ENCODE measurements at regions of chr7 and their contacts with region 1.

Region 1: DNA sequence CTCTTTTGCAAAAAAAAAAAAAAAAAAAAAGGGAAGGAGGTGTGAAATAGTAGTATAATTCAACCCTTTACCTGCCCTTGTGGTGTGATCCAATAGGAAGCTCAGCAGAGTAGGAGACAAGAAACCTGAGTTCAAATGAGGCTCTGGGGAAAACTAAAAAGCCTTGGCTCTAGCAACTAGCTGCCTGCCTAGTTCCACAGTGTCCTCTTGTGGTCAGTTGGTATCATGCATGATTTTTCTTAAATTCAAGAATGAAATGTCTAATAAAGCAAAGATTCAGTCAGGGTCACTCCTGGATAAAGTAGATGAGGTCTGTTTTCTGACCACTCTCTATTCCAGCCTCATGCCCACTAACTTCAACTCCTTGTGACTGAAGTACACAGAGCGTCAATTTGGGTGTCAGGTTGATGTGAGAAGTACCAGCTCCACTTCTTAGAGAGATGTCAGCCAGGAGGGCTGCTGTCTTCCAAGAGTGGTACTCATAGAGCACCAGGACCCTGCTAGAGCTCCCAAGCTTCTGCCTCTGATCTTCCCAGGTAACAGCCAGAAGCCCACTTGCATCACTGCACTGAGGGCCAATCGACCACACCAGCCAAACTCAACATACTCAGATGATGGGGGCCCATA is 10.5 kb downstream of the LSM5 start:
- DNase-seq: peak; percentile 48
- ATAC-seq: peak; percentile 42
- H3K4me3 Mint-ChIP-seq: no peak overlapping the region
- H3K27ac Mint-ChIP-seq: no peak overlapping the region
- H3K4me1 Mint-ChIP-seq: peaks cover 7% of the 10 kb centered on the region
- H3K27me3 Mint-ChIP-seq: peaks cover 7% of the 10 kb centered on the region

Region 2: DNA sequence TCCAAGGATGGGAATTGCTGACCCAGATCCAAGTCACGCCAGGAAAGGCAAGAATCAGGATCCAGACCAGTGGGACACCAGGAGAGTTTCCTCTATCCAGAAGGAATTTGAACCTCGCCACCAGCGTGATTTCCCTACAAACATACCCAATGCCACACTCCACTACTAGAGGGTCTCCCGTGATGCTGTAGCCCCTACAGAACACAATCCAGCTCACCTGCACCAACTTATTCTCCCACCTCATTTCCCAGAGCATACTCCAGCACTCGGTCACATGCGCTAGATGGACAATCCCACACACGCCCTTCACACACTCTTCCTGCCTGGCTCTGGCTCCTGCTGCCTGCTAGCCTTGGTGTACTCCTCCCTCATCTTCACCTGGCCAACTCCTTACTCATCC is 267.4 kb before region 1 on chr7:
- CTCF ChIA-PET with region 1: interaction called, 31 read pairs
- POLR2A ChIA-PET with region 1: no interaction called
- DNase-seq: no peak
- ATAC-seq: no peak
- H3K4me3 Mint-ChIP-seq: no peak overlapping the region
- H3K27ac Mint-ChIP-seq: no peak overlapping the region
- H3K4me1 Mint-ChIP-seq: no peaks in the 10 kb centered on the region
- H3K27me3 Mint-ChIP-seq: no peaks in the 10 kb centered on the region

Region 3: DNA sequence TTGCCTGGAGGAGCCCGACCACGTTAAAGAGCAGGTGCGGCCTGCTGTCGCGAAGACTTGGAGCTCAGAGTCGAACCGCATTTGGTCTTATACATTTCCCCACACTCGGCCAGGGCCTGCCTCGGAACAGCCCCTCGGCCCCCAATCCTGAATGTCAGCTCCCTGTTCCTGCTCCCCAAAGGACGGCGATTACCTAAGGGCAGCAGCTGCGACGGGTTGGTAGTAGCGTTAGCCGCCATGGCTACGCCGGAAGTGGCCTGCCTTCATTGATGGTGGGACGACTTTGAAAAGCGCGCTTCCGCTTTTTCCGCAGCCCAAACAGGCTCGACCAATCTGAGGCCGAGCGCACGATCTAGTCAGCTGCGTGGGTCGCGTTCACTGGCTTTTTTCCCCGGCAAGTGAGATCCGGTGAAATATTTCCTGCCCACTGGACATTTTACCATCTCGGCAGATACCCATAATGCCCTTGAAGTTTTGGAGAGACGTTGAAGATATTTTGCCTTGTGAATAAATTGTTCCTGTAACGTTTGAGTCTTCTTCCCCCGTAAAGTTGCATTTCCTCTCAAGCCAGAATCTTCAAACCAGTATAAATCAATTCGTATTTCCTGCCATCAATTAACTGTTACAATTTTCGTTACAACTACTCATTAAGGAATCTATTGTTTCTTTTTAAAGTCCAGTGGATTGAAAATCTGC is 10.6 kb after region 1 on chr7 and contains the start of gene LSM5:
- CTCF ChIA-PET with region 1: interaction called, 12 read pairs
- POLR2A ChIA-PET with region 1: interaction called, 3 read pairs
- DNase-seq: peak; percentile 94
- ATAC-seq: peak; percentile 81
- H3K4me3 Mint-ChIP-seq: peak within 1 kb of the TSS; percentile 77
- H3K27ac Mint-ChIP-seq: peak within 1 kb of the TSS; percentile 90
- H3K4me1 Mint-ChIP-seq: peaks cover 36% of the 10 kb centered on the region
- H3K27me3 Mint-ChIP-seq: no peaks in the 10 kb centered on the region
- total RNA-seq, gene LSM5: 94.4 to 97.1 TPM

Measured in activated CD8-positive, alpha-beta T cell treated with anti-CD3 and anti-CD28 coated beads, Interleukin-2, amount 10 ng/mL, durations not matched to agents 7 days and 5 days (primary cell).